Transverse colon (tissue), 4 donors: ENCODE measurements at regions of chr22 and their contacts with region 1.

Region 1: GRCh38 chr22:30471616-30472318 is at the start of gene SEC14L3:
- DNase-seq: no peak
- H3K4me3 ChIP-seq: no peak within 1 kb of the TSS
- H3K27ac ChIP-seq: no peak within 1 kb of the TSS
- H3K4me1 ChIP-seq: no peaks in the 10 kb centered on the region
- H3K27me3 ChIP-seq: peaks cover 9% of the 10 kb centered on the region
- CTCF ChIP-seq: no peak
- EP300 ChIP-seq: no peak
- POLR2A ChIP-seq: no peak
- total RNA-seq, gene SEC14L3: not detected

Region 2: GRCh38 chr22:30516273-30516672 is 44.5 kb after region 1 on chr22:
- in situ Hi-C with region 1: no loop called
- intact Hi-C with region 1: loop called (anchors 2 kb)
- DNase-seq: no peak
- H3K4me3 ChIP-seq: no peak overlapping the region
- H3K27ac ChIP-seq: no peak overlapping the region
- H3K4me1 ChIP-seq: no peaks in the 10 kb centered on the region
- H3K27me3 ChIP-seq: no peaks in the 10 kb centered on the region
- CTCF ChIP-seq: no peak
- EP300 ChIP-seq: no peak
- POLR2A ChIP-seq: no peak